ENCODE measurements at regions of chr12 and their contacts with region 1.

Region 1: DNA sequence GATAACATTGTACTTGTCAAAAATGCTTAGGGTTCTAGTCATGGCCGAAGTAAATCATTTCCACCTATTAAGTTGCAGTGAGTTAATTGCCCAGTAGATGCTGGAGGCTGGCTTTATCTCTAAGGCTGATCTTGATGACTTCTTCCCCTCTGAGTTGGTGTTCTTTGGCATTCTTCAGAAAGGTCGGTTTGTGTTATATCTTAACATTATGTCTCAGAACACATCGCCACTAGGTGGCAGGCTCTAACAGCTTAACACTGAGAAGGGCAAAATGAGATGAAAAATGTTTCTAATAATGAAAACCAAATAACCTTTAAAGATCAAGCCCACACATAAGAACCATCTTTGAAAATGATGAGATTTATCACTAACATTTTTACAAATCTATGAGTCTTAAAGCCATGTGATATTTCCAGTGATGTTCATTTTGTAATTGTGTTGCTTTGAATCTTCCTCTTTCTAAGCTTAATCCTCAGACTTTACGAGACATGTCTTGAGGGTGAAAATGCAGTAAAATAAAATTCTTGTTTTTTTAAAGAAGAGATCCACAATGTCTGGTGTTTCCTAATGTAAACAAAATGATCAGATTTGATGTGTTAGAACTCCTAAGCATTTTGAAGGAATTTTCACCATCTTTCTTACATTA is 28.6 kb downstream of the SUDS3 start:
- DNase-seq: peak; percentile 68
- ATAC-seq: peak; percentile 68
- H3K4me3 ChIP-seq: no peak overlapping the region
- H3K27ac ChIP-seq: no peak overlapping the region
- H3K4me1 ChIP-seq: peaks cover 1% of the 10 kb centered on the region; the same call in 1 of the 2 replicates
- H3K27me3 ChIP-seq: no peaks in the 10 kb centered on the region
- CTCF ChIP-seq: peak; percentile 75
- POLR2A ChIP-seq: 0 out of 2 replicates have a peak, but pooled peaks have one; percentile 27
- RAD21 ChIP-seq: peak; percentile 85

Region 2: DNA sequence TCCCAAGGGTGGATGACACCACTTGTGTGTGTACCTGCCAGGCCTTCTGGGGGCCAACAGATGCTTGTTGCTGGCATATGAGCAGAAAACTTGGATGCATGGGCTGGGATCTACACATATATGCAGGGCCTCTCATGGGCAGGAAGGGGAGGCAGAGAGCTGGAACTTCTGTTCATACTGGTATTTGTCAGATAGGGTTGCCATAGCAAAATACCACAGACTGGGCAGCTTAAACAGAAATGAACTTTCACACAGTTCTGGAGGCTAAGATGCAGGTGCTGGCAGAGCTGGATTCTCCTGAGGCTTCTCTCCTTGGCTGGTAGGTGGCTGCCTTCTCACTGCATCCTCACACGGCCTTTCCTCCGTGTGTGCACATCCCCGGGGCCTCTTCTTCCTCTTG is 93.2 kb after region 1 on chr12:
- CTCF ChIA-PET with region 1: no interaction called
- POLR2A ChIA-PET with region 1: no interaction called
- dilution Hi-C with region 1: no loop called
- in situ Hi-C with region 1: no loop called
- intact Hi-C with region 1: no loop called
- DNase-seq: no peak
- ATAC-seq: no peak
- H3K4me3 ChIP-seq: no peak overlapping the region
- H3K27ac ChIP-seq: no peak overlapping the region
- H3K4me1 ChIP-seq: no peaks in the 10 kb centered on the region
- H3K27me3 ChIP-seq: no peaks in the 10 kb centered on the region
- CTCF ChIP-seq: no peak
- POLR2A ChIP-seq: no peak
- RAD21 ChIP-seq: no peak

Region 3: GRCh38 chr12:119036878-119037825 is 632.2 kb after region 1 on chr12:
- CTCF ChIA-PET with region 1: no interaction called
- POLR2A ChIA-PET with region 1: no interaction called
- dilution Hi-C with region 1: no loop called
- in situ Hi-C with region 1: no loop called
- intact Hi-C with region 1: loop called (anchors 5 kb)
- DNase-seq: no peak
- ATAC-seq: no peak
- H3K4me3 ChIP-seq: no peak overlapping the region
- H3K27ac ChIP-seq: no peak overlapping the region
- H3K4me1 ChIP-seq: no peaks in the 10 kb centered on the region
- H3K27me3 ChIP-seq: no peaks in the 10 kb centered on the region
- CTCF ChIP-seq: peak; percentile 23; the same call in 1 of the 2 replicates
- POLR2A ChIP-seq: no peak
- RAD21 ChIP-seq: no peak

Region 4: GRCh38 chr12:119176267-119176849 is 771.4 kb after region 1 on chr12:
- CTCF ChIA-PET with region 1: no interaction called
- POLR2A ChIA-PET with region 1: no interaction called
- dilution Hi-C with region 1: no loop called
- in situ Hi-C with region 1: loop called (anchors 25 kb)
- intact Hi-C with region 1: loop called (anchors 10 kb)
- DNase-seq: peak; percentile 95
- ATAC-seq: peak; percentile 50
- H3K4me3 ChIP-seq: peak overlapping the region; percentile 14; the same call in 1 of the 2 replicates
- H3K27ac ChIP-seq: no peak overlapping the region
- H3K4me1 ChIP-seq: peaks cover 11% of the 10 kb centered on the region
- H3K27me3 ChIP-seq: peaks cover 2% of the 10 kb centered on the region; the same call in 1 of the 2 replicates
- CTCF ChIP-seq: no peak
- POLR2A ChIP-seq: no peak
- RAD21 ChIP-seq: no peak

Region 5: GRCh38 chr12:119423285-119423684 is 1018.3 kb after region 1 on chr12:
- CTCF ChIA-PET with region 1: no interaction called
- POLR2A ChIA-PET with region 1: no interaction called
- dilution Hi-C with region 1: no loop called
- in situ Hi-C with region 1: loop called (anchors 10 kb)
- intact Hi-C with region 1: no loop called
- DNase-seq: no peak
- ATAC-seq: no peak
- H3K4me3 ChIP-seq: no peak overlapping the region
- H3K27ac ChIP-seq: no peak overlapping the region
- H3K4me1 ChIP-seq: no peaks in the 10 kb centered on the region
- H3K27me3 ChIP-seq: no peaks in the 10 kb centered on the region
- CTCF ChIP-seq: no peak
- POLR2A ChIP-seq: no peak
- RAD21 ChIP-seq: no peak

Region 6: DNA sequence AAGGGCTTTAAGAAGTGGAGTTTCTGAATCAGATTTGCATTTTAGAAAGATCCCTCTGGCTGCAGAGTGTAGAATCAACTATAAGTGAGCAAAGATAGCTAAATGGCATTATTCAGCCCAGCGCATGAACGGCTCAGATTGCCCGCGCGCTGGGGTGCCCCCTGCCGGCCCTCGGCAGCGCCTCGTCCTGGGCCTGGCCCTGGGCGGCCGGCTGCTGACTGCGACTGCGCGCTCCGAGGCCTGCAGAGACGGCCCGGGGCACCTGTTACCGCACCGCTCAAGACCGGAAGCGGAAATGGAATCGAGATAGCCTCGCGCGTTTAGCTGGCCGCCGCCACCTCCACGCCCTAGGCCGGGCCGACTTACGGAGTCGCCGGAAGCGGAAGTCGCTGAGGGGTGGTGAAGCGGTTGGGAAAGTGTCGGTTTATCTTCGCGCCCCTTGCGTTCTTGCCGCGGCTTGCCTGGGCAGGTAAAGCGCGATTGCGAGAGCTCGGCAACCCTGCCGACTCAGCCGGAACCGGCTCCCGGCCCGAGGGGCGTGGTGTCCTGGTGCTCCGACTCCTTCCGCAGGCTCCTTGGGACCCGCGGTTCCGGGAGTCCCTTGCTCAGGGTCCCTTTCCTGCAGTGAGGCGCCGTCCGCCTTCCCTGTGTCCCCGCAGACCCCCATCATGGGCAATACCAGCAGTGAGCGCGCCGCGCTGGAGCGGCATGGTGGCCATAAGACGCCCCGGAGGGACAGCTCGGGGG is 1262.8 kb after region 1 on chr12 and contains the start of gene PRKAB1:
- CTCF ChIA-PET with region 1: no interaction called
- POLR2A ChIA-PET with region 1: no interaction called
- dilution Hi-C with region 1: no loop called
- in situ Hi-C with region 1: loop called (anchors 10 kb)
- intact Hi-C with region 1: loop called (anchors 1 kb)
- DNase-seq: peak; percentile 96
- ATAC-seq: peak; percentile 99
- H3K4me3 ChIP-seq: peak within 1 kb of the TSS; percentile 81
- H3K27ac ChIP-seq: peak within 1 kb of the TSS; percentile 80
- H3K4me1 ChIP-seq: no peaks in the 10 kb centered on the region
- H3K27me3 ChIP-seq: no peaks in the 10 kb centered on the region
- CTCF ChIP-seq: peak; percentile 96
- POLR2A ChIP-seq: peak; percentile 61
- RAD21 ChIP-seq: peak; percentile 60
- total RNA-seq, gene PRKAB1: 6.9 and 9.7 TPM in 2 replicates

Measured in IMR-90 (cell line).